ENCODE measurements at regions of chr1 and their contacts with region 1.

Region 1: DNA sequence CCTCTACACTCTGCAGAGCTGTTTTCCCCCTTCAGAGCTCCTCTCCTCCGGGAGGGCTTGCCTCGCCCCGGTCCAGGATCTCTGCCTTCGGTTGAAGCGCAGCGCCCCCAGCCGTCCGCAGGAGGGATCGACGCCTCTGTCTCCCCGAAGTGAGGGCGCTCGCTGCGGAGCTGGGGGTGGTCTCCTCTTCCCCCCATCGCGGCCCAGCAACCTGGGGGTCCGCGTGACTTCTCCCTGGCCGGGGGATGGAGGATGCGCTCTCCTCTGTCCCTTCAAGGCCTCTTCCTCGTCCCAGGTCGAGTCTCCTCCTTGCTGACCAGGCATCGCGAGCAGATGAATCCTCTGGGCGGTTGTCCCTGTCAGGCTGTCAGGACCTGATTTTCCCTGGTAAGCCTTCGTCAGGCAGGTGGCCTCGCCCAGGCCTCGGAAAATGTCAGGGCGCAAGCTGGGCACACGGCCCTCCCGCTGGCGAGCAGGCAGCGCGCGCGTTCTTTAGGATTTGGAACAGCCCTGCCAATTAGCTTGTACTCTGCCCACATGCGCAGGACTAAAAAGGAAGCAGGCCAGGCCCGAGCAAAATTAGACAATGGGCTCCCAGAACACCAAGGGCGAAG is 90.5 kb downstream of the EDEM3 start:
- DNase-seq: no peak
- ATAC-seq: peak; percentile 93
- H3K4me3 ChIP-seq: no peak overlapping the region
- H3K27ac ChIP-seq: no peak overlapping the region
- H3K4me1 ChIP-seq: no peaks in the 10 kb centered on the region
- H3K27me3 ChIP-seq: peaks cover 0 to 3% of the 10 kb centered on the region in 2 experiments; a peak in 2 of 4 replicates
- CTCF ChIP-seq: peak; percentile 74 to 84 (median 77)
- EP300 ChIP-seq: no peak
- POLR2A ChIP-seq: no peak
- RAD21 ChIP-seq: peak; percentile 76

Region 2: DNA sequence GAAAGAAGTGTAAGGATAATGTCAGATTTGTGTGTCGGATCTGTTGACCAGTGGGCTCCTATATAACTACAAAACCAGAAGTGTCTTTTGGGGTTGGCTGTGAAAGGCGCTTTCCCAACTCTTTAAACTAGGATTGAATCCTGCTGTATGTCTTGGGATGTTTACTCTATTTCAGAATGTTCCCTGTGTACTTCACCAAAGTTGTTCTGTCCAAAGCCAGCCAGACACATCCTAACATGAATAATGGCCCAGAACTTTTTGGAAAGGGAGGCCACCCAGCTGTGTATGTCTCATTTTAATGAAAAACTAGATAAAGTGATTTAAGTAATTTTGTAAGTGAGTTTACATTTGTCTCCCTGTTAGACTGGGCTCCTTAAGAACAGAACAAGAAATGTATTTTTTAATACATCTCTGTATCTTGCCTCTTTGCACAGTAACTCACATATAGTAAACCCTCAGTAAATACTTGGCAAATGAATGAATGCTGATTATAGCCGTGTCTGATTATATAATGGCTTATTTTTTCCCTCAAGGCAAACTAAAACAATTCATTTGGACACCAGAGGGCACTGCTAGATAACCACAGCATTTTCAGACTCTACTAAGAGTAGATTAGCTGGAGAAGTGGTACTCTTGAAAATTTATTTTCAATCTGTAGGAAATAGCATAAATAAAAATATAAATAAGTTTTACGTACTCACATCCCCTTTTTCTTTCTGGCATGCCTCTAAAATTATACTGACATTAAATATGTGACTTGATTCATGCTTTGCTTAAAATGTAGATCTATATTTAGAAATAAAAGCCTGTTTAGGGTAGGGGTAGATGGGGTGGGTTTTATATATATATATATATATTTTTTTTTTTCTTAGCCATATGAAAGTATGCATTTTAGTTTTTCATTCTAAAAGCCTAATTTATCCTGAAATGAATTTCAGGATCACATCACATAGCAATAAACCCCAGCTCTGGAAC is 588.8 kb before region 1 on chr1:
- CTCF ChIA-PET with region 1: interaction called, 8 read pairs
- POLR2A ChIA-PET with region 1: no interaction called
- RAD21 ChIA-PET with region 1: interaction called, 4 read pairs
- SMC1A ChIA-PET with region 1: interaction called, 3 read pairs
- in situ Hi-C with region 1: loop called (anchors 10 kb)
- intact Hi-C with region 1: loop called (anchors 5 kb)
- DNase-seq: no peak
- ATAC-seq: peak; percentile 91
- H3K4me3 ChIP-seq: no peak overlapping the region
- H3K27ac ChIP-seq: no peak overlapping the region
- H3K4me1 ChIP-seq: no peaks in the 10 kb centered on the region
- H3K27me3 ChIP-seq: no peaks in the 10 kb centered on the region
- CTCF ChIP-seq: peak; percentile 52 to 74 (median 62)
- EP300 ChIP-seq: 0 out of 4 replicates have a peak, but pooled peaks of 1 of the 2 experiments have one; percentile 12
- POLR2A ChIP-seq: no peak
- RAD21 ChIP-seq: peak; percentile 96

Region 3: DNA sequence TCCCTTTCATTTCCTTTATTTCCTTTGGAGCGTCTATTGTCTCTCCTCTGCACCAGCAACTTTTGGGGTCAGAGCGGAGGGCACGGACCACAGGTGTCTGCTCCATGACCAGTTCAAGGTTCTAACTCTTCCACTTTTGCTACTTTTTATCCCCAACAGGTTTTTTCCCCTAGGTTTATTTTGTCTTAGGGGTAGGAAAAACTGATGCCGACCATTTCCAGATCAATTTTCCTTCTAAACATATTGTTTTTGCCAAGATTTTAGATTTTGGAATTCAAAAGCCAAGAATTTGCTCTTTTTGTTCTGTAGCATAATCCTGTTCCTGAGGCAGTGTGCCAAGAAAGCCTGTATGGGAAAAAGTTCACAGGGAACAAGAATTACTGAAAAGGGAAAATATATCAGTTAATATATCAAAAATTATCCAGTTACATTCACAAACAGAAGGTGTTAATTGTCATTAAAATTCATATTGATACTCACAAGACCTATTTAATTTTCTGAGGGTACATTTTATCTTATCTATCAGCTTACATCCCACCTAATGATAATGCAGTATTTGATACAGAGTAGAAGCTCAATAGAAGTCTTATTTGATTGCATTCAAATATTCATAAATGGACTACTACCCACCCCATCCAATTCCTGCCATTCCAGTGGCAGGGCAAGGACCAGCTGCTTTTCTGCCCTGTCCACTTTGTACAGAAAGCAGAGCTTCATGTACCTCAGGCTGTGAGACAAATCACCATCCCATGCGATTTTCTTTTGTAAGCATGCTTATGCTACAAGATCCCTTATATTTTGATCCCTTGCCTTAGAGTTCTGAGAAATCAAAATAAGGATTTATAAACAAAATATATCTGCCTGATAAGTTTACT is 581.4 kb before region 1 on chr1:
- CTCF ChIA-PET with region 1: interaction called, 3 read pairs
- POLR2A ChIA-PET with region 1: no interaction called
- RAD21 ChIA-PET with region 1: no interaction called
- SMC1A ChIA-PET with region 1: no interaction called
- in situ Hi-C with region 1: loop called (anchors 10 kb)
- intact Hi-C with region 1: loop called (anchors 5 kb)
- DNase-seq: no peak
- ATAC-seq: no peak
- H3K4me3 ChIP-seq: no peak overlapping the region
- H3K27ac ChIP-seq: no peak overlapping the region
- H3K4me1 ChIP-seq: no peaks in the 10 kb centered on the region
- H3K27me3 ChIP-seq: no peaks in the 10 kb centered on the region
- CTCF ChIP-seq: no peak
- EP300 ChIP-seq: no peak
- POLR2A ChIP-seq: no peak
- RAD21 ChIP-seq: no peak

Region 4: GRCh38 chr1:184222652-184223052 is 441.5 kb before region 1 on chr1:
- CTCF ChIA-PET with region 1: interaction called, 4 read pairs
- POLR2A ChIA-PET with region 1: no interaction called
- RAD21 ChIA-PET with region 1: interaction called, 7 read pairs
- SMC1A ChIA-PET with region 1: interaction called, 3 read pairs
- in situ Hi-C with region 1: no loop called
- intact Hi-C with region 1: loop called (anchors 10 kb)
- DNase-seq: peak; percentile 11
- ATAC-seq: peak; percentile 59
- H3K4me3 ChIP-seq: no peak overlapping the region
- H3K27ac ChIP-seq: no peak overlapping the region
- H3K4me1 ChIP-seq: no peaks in the 10 kb centered on the region
- H3K27me3 ChIP-seq: peaks cover 0 to 5% of the 10 kb centered on the region in 2 experiments; a peak in 1 of 4 replicates
- CTCF ChIP-seq: peak; percentile 86 to 96 (median 93)
- EP300 ChIP-seq: no peak
- POLR2A ChIP-seq: no peak
- RAD21 ChIP-seq: peak; percentile 90

Region 5: DNA sequence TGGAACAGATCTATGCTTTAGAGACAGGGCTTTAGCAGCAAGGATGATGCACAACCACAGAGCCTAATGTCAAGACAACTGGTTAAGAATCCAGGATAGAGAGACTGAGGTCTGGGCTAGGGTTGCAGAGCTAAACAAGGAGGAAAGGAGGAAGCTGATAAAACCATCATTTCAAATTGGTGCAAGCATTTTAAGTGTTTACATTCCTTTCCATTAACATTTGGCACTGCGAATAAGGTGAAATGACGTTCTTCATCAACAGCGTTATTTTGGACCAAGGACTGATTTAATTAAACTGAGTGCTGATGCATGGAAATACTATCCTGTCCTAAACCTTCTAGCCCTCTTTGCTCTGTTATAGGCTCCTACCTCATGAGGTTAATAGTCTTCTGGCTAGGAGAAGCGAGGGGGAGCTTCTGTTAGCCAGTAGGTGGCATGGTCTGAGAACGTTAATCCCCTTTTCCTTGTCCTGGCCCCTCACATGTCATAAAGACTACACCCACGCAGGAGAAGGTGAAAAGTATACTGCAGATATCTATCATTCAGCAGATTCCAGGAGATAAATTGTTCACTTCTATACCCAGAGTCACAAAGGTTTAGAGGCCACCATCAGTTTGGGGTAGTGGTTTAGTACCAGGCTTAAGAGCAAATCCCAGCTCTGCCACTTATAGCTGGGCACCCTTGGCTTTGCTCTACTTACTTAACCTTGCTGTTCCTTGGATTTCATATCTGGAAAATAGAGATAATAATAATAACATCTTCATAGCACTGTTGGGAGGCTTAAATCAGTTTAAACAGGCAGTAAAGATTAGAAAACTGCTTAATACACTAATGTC is 284.8 kb before region 1 on chr1:
- CTCF ChIA-PET with region 1: interaction called, 10 read pairs
- POLR2A ChIA-PET with region 1: no interaction called
- RAD21 ChIA-PET with region 1: no interaction called
- SMC1A ChIA-PET with region 1: interaction called, 4 read pairs
- in situ Hi-C with region 1: no loop called
- intact Hi-C with region 1: no loop called
- DNase-seq: no peak
- ATAC-seq: no peak
- H3K4me3 ChIP-seq: no peak overlapping the region
- H3K27ac ChIP-seq: no peak overlapping the region
- H3K4me1 ChIP-seq: no peaks in the 10 kb centered on the region
- H3K27me3 ChIP-seq: peaks cover 0 to 2% of the 10 kb centered on the region in 2 experiments; a peak in 2 of 4 replicates
- CTCF ChIP-seq: 0 out of 6 replicates have a peak, but pooled peaks of 1 of the 3 experiments have one; percentile 2
- EP300 ChIP-seq: no peak
- POLR2A ChIP-seq: no peak
- RAD21 ChIP-seq: no peak

Region 6: DNA sequence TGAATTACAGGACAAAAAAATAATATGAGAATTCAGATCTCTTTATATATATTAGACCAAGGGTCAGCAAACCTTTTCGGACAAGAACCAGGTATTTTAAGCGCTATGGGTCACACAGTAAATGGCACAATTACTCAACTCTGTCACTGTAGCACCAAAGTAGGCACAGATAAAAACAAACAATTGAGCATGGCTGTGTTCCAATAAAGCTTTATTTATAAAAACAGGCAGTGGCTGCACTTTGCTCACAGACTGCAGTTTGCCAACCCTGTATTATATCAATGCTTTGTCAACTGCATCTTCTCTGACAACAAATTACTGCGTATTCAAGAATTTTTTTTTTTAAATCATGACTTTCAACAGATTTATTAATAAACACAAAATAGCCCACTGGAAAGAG is 60.7 kb after region 1 on chr1:
- CTCF ChIA-PET with region 1: interaction called, 3 read pairs
- POLR2A ChIA-PET with region 1: no interaction called
- RAD21 ChIA-PET with region 1: no interaction called
- SMC1A ChIA-PET with region 1: no interaction called
- in situ Hi-C with region 1: no loop called
- intact Hi-C with region 1: loop called (anchors 10 kb)
- DNase-seq: no peak
- ATAC-seq: no peak
- H3K4me3 ChIP-seq: no peak overlapping the region
- H3K27ac ChIP-seq: no peak overlapping the region
- H3K4me1 ChIP-seq: no peaks in the 10 kb centered on the region
- H3K27me3 ChIP-seq: no peaks in the 10 kb centered on the region
- CTCF ChIP-seq: no peak
- EP300 ChIP-seq: no peak
- POLR2A ChIP-seq: no peak
- RAD21 ChIP-seq: no peak

Region 7: DNA sequence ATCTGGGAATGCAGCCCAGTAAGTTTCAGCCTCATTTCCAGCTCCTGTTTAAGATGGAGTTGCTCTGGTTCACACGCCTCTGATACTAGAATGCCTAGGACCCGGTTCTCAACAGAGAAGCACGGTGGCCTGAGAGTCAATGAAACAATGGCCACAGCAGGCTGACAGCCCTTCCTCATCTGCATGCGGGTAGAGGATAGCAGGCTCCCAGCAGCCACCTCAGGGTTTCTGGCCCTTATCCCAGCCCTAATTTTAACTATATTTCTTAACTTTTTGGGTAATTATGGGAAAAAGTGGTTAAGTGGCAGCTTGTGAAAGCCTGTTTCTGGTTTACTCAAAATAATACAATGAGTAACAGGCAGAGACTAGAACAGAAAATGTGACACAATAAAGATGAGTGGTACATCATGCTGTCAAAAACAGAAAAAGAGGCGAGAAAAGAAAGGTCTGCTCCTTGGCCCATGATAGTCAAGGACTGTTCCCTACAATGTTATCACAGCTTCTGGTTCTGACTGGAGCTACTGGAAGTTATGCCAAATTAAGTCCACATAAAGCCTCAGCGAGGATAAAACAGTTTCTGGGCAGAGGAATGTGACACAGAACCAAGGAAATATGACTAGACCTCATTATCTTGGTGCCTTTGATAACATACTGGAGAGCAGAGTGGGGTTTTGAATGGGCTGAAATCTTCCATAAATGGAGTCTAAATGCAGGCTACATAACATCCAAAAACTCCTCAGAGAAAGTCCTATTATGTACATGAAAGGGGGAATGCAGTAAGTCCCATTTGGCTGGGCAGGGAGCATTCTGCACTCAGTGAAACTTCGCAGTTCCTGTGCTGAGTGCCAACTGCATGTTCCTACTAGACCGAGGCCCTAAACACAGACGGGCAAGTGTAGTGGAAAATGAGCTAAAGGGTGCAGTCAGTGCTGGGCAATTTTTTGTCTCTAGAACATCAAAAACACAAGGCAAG is 218.1 kb after region 1 on chr1:
- CTCF ChIA-PET with region 1: no interaction called
- POLR2A ChIA-PET with region 1: no interaction called
- RAD21 ChIA-PET with region 1: no interaction called
- SMC1A ChIA-PET with region 1: no interaction called
- in situ Hi-C with region 1: no loop called
- intact Hi-C with region 1: no loop called
- DNase-seq: no peak
- ATAC-seq: peak; percentile 82
- H3K4me3 ChIP-seq: no peak overlapping the region
- H3K27ac ChIP-seq: peak overlapping the region; percentile 66
- H3K4me1 ChIP-seq: peaks cover 18% of the 10 kb centered on the region
- H3K27me3 ChIP-seq: no peaks in the 10 kb centered on the region
- CTCF ChIP-seq: no peak
- EP300 ChIP-seq: peak; percentile 48 to 52; a peak in 2 of 4 replicates
- POLR2A ChIP-seq: no peak
- RAD21 ChIP-seq: no peak